ENCODE measurements at regions of chr11 and their contacts with region 1.

Region 1: GRCh38 chr11:42913731-42914130 is 398.1 kb upstream of the API5 start:
- DNase-seq: no peak
- ATAC-seq: no peak

Region 2: GRCh38 chr11:42528886-42529285 is 384.8 kb before region 1 on chr11:
- intact Hi-C with region 1: no loop called
- DNase-seq: no peak
- ATAC-seq: no peak

Region 3: DNA sequence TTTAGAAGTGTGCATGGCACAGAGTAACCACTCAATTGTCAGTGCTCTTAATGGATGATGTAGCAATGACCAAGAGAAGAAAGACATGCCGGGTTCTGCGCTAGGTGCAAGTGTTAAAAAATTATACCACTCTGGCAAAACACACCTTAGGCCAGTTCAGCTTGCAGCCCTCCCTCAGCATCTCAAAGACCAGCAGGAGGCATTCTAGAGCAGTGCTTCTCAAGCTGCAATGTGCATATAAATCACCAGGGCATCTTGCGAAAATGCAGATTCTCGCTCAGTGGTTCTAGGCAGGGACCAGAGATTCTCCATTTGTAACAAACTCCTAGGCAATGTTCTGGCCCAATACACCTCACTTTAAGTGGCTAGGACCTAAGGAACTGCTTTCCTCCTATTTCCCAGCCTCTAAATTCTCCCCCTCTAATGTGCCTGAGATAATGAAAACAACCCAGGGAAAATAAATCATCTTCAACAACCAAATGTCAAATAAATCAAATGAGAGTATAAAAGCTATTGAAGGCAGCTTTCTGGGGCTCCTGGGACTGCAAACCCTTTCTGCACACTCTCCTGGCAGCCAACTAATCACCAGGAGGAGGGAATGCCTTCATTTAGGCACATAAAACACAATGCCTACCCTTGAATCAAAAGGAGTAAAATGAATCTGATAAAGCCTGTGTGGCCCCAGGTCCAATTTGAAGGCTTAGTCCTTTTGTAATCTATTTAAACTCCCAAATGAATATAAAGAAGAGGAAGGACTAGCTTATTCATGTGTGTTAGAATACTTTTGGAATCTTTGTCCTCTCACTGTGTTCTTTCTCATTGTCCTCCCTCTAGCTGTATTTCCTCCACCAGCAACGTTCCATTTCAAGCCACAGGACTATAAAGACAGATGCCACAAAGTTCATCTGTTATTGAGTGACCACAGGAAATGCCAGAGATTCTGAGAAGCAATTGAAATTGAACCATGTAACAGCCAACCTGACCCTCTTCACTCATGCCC is 61.1 kb after region 1 on chr11:
- intact Hi-C with region 1: loop called in 1 of 2 experiments (anchors 10 kb)
- DNase-seq: no peak
- ATAC-seq: no peak